ENCODE measurements at regions of chr18 and their contacts with region 1.

Region 1: DNA sequence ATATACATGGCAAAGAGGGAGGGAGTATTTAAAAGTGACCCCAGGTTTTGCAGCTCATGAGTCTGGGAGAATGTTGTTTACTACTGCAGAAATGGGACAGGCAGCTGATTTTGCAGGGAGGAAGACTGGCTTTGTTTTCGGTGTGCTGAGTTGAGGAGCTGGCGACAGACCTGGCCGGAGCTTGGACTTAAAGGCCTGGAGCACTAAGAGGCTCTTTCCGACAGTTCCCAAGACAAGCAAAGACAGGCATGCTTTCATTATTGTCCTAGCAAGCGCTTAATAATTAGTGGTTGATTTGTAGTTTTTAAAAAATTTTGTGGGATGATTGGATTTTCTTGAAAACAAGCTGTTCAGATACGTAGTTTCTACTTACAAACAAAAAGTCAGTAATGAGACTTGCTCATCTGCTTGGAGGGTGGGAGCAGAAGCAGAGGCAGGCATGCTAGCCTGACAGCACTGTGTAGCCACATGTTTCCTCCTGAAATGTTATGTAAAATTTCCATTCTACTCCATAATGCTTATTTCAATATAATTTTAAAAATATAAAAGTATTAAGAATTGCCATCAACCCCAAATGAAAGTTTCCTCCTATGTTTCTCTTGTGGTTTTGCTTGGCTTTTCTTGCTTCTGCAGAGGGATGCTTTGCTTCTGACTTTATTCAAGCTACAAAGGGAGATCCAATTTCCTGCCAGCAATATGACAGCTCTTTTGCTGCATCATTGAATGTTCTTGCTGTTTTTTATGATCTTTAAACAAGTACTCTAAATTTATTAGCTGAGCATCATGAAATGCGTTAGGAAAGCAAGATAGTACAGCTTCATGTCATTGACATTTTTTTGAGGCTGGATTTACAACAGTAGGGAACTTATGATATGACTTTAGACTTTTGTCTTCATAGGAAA is 75.8 kb downstream of the PHLPP1 start:
- DNase-seq: no peak
- H3K4me3 ChIP-seq: no peak overlapping the region
- H3K27ac ChIP-seq: no peak overlapping the region
- H3K4me1 ChIP-seq: no peaks in the 10 kb centered on the region
- H3K27me3 ChIP-seq: no peaks in the 10 kb centered on the region
- CTCF ChIP-seq: no peak

Region 2: GRCh38 chr18:62088156-62088555 is 703.0 kb before region 1 on chr18:
- intact Hi-C with region 1: no loop called
- DNase-seq: no peak
- H3K4me3 ChIP-seq: no peak overlapping the region
- H3K27ac ChIP-seq: no peak overlapping the region
- H3K4me1 ChIP-seq: no peaks in the 10 kb centered on the region
- H3K27me3 ChIP-seq: no peaks in the 10 kb centered on the region
- CTCF ChIP-seq: no peak

Region 3: DNA sequence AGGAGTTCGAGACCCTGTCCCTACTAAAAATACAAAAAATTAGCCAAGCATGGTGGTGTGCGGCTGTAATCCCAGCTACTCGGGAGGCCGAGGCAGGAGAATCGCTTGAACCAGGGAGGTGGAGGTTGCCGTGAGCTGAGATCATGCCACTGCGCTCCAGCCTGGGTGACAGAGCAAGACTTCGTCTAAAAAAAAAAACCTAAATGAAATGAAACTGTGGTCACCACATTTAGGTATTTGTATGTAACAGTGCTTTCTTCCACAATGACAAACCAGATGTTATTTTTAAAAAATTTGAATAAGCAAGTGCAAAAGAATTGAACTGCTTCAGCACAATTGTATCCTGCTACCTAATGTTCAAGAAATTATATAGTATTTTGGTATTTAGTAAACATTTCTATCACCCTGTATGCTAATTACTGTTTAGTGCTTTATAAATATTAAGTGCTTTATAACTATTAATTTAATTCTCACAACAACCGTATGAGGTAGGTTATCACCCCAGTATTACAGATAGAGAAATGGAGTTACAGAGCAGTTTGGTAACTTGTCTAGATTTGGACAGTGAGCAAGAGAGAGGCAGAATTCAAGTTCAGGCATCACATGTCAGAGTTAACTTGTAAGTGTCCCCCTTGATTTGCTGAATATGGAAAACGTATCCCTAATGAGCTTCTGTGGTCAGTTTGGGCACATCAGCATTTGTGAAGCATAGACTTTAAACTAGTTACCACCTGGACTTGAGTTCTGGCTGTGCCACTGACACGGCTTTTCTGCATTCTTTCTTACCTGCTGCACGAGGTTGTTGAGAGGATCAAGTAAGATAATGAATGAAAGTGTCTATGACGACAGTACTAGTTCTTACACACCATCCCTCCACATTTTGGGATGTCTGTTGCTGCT is 61.4 kb before region 1 on chr18:
- intact Hi-C with region 1: loop called (anchors 10 kb)
- DNase-seq: no peak
- H3K4me3 ChIP-seq: no peak overlapping the region
- H3K27ac ChIP-seq: no peak overlapping the region
- H3K4me1 ChIP-seq: no peaks in the 10 kb centered on the region
- H3K27me3 ChIP-seq: no peaks in the 10 kb centered on the region
- CTCF ChIP-seq: no peak

Measured in colonic mucosa (tissue), 4 donors.